ENCODE measurements at regions of chr1 and their contacts with region 1.

Region 1: GRCh38 chr1:37514350-37515184 is at the start of gene MEAF6:
- DNase-seq: peak; percentile 84 to 93
- ATAC-seq: peak; percentile 94 to 99 (median 98)
- H3K4me3 ChIP-seq: peak within 1 kb of the TSS; percentile 78
- H3K4me3 Mint-ChIP-seq: peak within 1 kb of the TSS; percentile 98
- H3K27ac ChIP-seq: peak within 1 kb of the TSS; percentile 96
- H3K27ac Mint-ChIP-seq: peak within 1 kb of the TSS; percentile 94 to 97
- H3K4me1 ChIP-seq: peaks cover 21% of the 10 kb centered on the region
- H3K4me1 Mint-ChIP-seq: peaks cover 38 to 52% of the 10 kb centered on the region in 2 donors
- H3K27me3 ChIP-seq: no peaks in the 10 kb centered on the region
- H3K27me3 Mint-ChIP-seq: no peaks in the 10 kb centered on the region
- CTCF ChIP-seq: peak; percentile 84
- total RNA-seq, gene MEAF6: 63.9 to 78.7 (median 69.0) TPM

Region 2: GRCh38 chr1:37143800-37144199 is 370.8 kb before region 1 on chr1:
- intact Hi-C with region 1: no loop called
- DNase-seq: no peak
- ATAC-seq: no peak
- H3K4me3 ChIP-seq: no peak overlapping the region
- H3K4me3 Mint-ChIP-seq: no peak overlapping the region
- H3K27ac ChIP-seq: no peak overlapping the region
- H3K27ac Mint-ChIP-seq: no peak overlapping the region
- H3K4me1 ChIP-seq: no peaks in the 10 kb centered on the region
- H3K4me1 Mint-ChIP-seq: no peaks in the 10 kb centered on the region
- H3K27me3 ChIP-seq: no peaks in the 10 kb centered on the region
- H3K27me3 Mint-ChIP-seq: peaks cover 6 to 11% of the 10 kb centered on the region in 2 donors
- CTCF ChIP-seq: no peak

Region 3: DNA sequence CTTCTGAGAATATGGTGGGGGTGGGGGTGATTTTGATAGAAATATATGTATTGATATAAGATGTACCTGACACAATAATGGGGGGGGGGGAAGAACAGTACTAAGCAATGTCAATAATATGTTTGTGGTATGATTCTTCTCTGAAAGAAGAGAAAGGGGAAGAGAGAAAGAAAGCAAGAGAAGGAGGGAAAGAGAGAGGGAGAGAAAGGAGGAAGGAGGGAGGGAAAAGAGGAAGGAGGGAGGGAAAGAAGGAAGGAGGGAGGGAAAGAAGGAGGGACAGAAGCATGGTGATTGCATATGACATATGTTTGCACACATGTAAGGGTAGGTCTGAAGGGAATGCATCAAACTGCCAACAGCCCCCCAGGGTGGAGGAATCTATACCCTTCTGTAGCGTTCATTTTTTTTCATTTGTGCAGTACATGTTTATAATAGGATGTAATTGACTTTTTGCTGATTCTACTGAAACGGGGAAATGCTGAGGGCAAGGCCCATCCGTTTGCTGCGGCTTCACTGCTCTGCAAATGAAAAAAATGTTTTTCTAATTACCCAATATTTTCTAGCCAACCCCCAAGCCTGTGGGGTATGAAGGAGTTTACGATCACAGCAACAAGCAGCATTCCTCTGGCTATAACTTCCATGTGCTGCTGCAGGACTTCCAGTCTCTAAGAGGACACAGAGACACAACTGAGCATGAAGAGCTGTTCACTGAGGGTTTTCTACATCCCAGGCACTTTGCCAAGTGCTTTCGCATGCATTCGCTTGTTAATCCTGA is 159.5 kb before region 1 on chr1:
- intact Hi-C with region 1: no loop called
- DNase-seq: no peak
- ATAC-seq: no peak
- H3K4me3 ChIP-seq: no peak overlapping the region
- H3K4me3 Mint-ChIP-seq: no peak overlapping the region
- H3K27ac ChIP-seq: no peak overlapping the region
- H3K27ac Mint-ChIP-seq: no peak overlapping the region
- H3K4me1 ChIP-seq: no peaks in the 10 kb centered on the region
- H3K4me1 Mint-ChIP-seq: no peaks in the 10 kb centered on the region
- H3K27me3 ChIP-seq: no peaks in the 10 kb centered on the region
- H3K27me3 Mint-ChIP-seq: peaks cover 20 to 29% of the 10 kb centered on the region in 2 donors
- CTCF ChIP-seq: no peak

Region 4: DNA sequence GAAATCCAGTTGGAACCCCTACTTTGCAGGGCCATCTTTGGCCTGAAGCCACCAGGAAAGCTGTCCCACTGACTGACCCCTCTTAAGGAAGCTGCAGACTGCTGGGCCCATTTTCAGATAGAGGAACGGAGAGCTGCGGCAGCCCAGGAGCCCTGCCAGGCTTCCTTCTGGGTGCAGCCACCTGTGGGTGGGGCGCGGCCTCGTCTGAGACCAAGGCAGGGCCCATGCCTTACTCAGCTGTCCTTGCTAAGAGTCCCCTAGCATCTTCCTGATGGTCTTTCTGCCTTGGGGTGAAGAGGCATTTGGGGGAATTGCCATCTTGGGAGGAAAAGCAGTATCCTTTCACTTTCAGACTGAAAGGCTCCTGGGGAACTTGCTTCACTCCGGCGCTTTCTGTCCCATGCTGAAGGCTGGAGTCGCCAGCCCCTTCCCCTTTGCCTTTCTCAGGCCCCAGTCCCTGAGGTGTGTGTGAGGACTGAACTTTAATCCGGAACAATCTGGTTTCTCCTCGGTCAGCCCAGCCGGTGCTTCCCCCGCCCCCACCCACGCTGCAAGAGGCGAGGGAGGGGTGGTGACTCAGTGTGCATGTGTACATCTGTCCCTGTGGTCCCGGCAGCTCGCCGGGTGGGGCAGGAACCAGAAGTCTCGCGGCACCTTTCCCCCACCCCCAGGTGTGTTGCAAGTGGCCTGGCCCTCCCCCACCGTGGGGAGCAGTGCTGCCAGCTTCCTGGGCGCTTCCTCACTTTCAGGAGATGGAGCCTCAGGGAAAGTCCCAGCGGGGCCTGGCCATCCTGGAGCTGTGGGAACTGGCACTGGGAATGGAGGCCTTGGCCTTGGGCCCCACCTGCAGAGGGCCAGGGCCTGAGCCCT is 35.1 kb before region 1 on chr1:
- intact Hi-C with region 1: loop called (anchors 2 kb)
- DNase-seq: peak; percentile 81 to 92
- ATAC-seq: peak; percentile 41 to 72 (median 50)
- H3K4me3 ChIP-seq: peak overlapping the region; percentile 93
- H3K4me3 Mint-ChIP-seq: peak overlapping the region; percentile 95
- H3K27ac ChIP-seq: peak overlapping the region; percentile 99
- H3K27ac Mint-ChIP-seq: peak overlapping the region; percentile 99 to 100
- H3K4me1 ChIP-seq: peaks cover 75% of the 10 kb centered on the region
- H3K4me1 Mint-ChIP-seq: peaks cover 63 to 81% of the 10 kb centered on the region in 2 donors
- H3K27me3 ChIP-seq: no peaks in the 10 kb centered on the region
- H3K27me3 Mint-ChIP-seq: no peaks in the 10 kb centered on the region
- CTCF ChIP-seq: no peak

Region 5: GRCh38 chr1:37553927-37554808 is 39.6 kb after region 1 on chr1 and contains the start of gene SNIP1:
- intact Hi-C with region 1: loop called (anchors 2 kb)
- DNase-seq: peak; percentile 85 to 96
- ATAC-seq: peak; percentile 94 to 99 (median 94)
- H3K4me3 ChIP-seq: peak within 1 kb of the TSS; percentile 81
- H3K4me3 Mint-ChIP-seq: peak within 1 kb of the TSS; percentile 99
- H3K27ac ChIP-seq: peak within 1 kb of the TSS; percentile 84
- H3K27ac Mint-ChIP-seq: peak within 1 kb of the TSS; percentile 93 to 98
- H3K4me1 ChIP-seq: peaks cover 15% of the 10 kb centered on the region
- H3K4me1 Mint-ChIP-seq: peaks cover 38 to 45% of the 10 kb centered on the region in 2 donors
- H3K27me3 ChIP-seq: no peaks in the 10 kb centered on the region
- H3K27me3 Mint-ChIP-seq: peaks cover 0 to 2% of the 10 kb centered on the region in 2 donors
- CTCF ChIP-seq: no peak
- total RNA-seq, gene SNIP1: 67.2 to 74.8 (median 68.1) TPM

Measured in natural killer cell (primary cell).